Activated B cell treated with CpG ODN at 0.5 μM for 24 hours (primary cell): ENCODE measurements at regions of chr3 and their contacts with region 1.

Region 1: GRCh38 chr3:183033746-183034145 is 53.4 kb upstream of the DCUN1D1 start:
- DNase-seq: no peak
- ATAC-seq: no peak
- H3K4me3 Mint-ChIP-seq: no peak overlapping the region
- H3K27ac Mint-ChIP-seq: no peak overlapping the region
- H3K4me1 Mint-ChIP-seq: no peaks in the 10 kb centered on the region
- H3K27me3 Mint-ChIP-seq: no peaks in the 10 kb centered on the region
- CTCF ChIP-seq: no peak

Region 2: GRCh38 chr3:183013856-183014255 is 19.9 kb before region 1 on chr3:
- CTCF ChIA-PET with region 1: no interaction called
- POLR2A ChIA-PET with region 1: interaction called, 12 read pairs
- intact Hi-C with region 1: no loop called
- DNase-seq: no peak
- ATAC-seq: no peak
- H3K4me3 Mint-ChIP-seq: no peak overlapping the region
- H3K27ac Mint-ChIP-seq: no peak overlapping the region
- H3K4me1 Mint-ChIP-seq: no peaks in the 10 kb centered on the region
- H3K27me3 Mint-ChIP-seq: no peaks in the 10 kb centered on the region
- CTCF ChIP-seq: no peak